Transverse colon (tissue), 4 donors: ENCODE measurements at regions of chr4 and their contacts with region 1.

Region 1: DNA sequence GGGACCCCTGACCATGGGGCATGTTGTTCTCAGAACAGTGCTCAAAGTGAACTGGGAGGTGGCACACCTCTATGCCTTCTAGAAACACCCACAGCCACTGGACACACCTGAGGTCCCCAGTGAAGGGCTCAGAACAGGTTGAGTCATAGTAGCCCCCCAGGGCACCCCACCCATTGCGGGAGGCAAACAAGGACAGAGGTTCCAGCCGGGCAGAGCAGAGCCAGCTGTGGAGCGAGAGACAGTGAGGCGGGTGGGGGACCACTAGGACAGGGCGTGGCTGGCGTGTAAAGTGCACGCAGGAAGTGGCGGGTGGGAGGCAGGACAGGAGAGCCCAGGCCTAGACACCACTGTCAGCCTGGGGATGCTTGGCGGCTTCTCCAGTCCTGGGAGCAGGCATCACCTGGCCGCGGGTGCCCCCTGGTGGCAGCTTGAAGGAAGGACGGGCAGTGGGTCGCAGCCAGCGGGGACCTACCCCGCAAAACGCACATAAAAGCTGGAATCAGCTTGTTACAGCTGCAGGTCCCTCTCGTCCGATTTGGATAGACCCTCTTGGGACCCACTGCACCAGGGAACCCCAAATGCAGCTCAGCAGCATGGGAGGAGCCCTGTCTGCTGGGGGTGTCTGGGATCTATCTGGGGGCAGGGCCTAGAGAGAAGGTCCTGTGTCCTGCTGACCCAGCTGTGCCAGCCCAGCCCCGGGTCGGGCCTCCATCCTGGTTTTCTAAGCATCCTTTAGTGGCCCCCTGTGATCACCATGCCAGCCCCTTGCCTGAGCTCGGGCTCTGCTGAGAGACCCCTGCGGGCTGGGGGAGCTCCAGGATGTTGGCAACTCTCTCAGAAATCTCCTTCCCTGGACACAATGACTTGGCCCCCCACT is 57.6 kb downstream of the WFS1 start:
- DNase-seq: peak; percentile 81
- H3K4me3 ChIP-seq: no peak overlapping the region
- H3K27ac ChIP-seq: no peak overlapping the region
- H3K4me1 ChIP-seq: peaks cover 0 to 8% (median 1%) of the 10 kb centered on the region in 4 donors
- H3K27me3 ChIP-seq: peaks cover 4% of the 10 kb centered on the region
- CTCF ChIP-seq: peak; percentile 94 to 97 (median 96)
- EP300 ChIP-seq: no peak
- POLR2A ChIP-seq: no peak

Region 2: GRCh38 chr4:5845035-5845905 is 482.0 kb before region 1 on chr4:
- in situ Hi-C with region 1: no loop called
- intact Hi-C with region 1: no loop called
- DNase-seq: no peak
- H3K4me3 ChIP-seq: no peak overlapping the region
- H3K27ac ChIP-seq: peak overlapping the region in 3 of 4 donors; percentile 26 to 69 (median 39)
- H3K4me1 ChIP-seq: peaks cover 0 to 13% (median 3%) of the 10 kb centered on the region in 4 donors
- H3K27me3 ChIP-seq: no peaks in the 10 kb centered on the region
- CTCF ChIP-seq: no peak
- EP300 ChIP-seq: no peak
- POLR2A ChIP-seq: no peak

Region 3: GRCh38 chr4:6200011-6200921 is 127.0 kb before region 1 on chr4 and contains the start of gene JAKMIP1:
- in situ Hi-C with region 1: no loop called
- intact Hi-C with region 1: no loop called
- DNase-seq: peak; percentile 82
- H3K4me3 ChIP-seq: peak within 1 kb of the TSS; percentile 19 to 53 (median 41)
- H3K27ac ChIP-seq: no peak within 1 kb of the TSS
- H3K4me1 ChIP-seq: peaks cover 0 to 16% (median 14%) of the 10 kb centered on the region in 4 donors
- H3K27me3 ChIP-seq: peaks cover 60% of the 10 kb centered on the region
- CTCF ChIP-seq: no peak
- EP300 ChIP-seq: no peak
- POLR2A ChIP-seq: no peak
- total RNA-seq, gene JAKMIP1: 1.2 to 1.7 TPM in 2 of 4 donors, not detected in the others

Region 4: GRCh38 chr4:6250235-6250983 is 76.9 kb before region 1 on chr4:
- in situ Hi-C with region 1: loop called (anchors 5 kb)
- intact Hi-C with region 1: loop called (anchors 1 kb)
- DNase-seq: no peak
- H3K4me3 ChIP-seq: no peak overlapping the region
- H3K27ac ChIP-seq: no peak overlapping the region
- H3K4me1 ChIP-seq: no peaks in the 10 kb centered on the region
- H3K27me3 ChIP-seq: peaks cover 49% of the 10 kb centered on the region
- CTCF ChIP-seq: peak; percentile 76 to 89 (median 83)
- EP300 ChIP-seq: no peak
- POLR2A ChIP-seq: no peak

Region 5: GRCh38 chr4:6257247-6258025 is 69.8 kb before region 1 on chr4:
- in situ Hi-C with region 1: loop called (anchors 5 kb)
- intact Hi-C with region 1: no loop called
- DNase-seq: no peak
- H3K4me3 ChIP-seq: no peak overlapping the region
- H3K27ac ChIP-seq: no peak overlapping the region
- H3K4me1 ChIP-seq: no peaks in the 10 kb centered on the region
- H3K27me3 ChIP-seq: peaks cover 13% of the 10 kb centered on the region
- CTCF ChIP-seq: no peak
- EP300 ChIP-seq: no peak
- POLR2A ChIP-seq: no peak

Region 6: GRCh38 chr4:6362896-6363295 is 35.6 kb after region 1 on chr4:
- in situ Hi-C with region 1: no loop called
- intact Hi-C with region 1: no loop called
- DNase-seq: no peak
- H3K4me3 ChIP-seq: no peak overlapping the region
- H3K27ac ChIP-seq: no peak overlapping the region
- H3K4me1 ChIP-seq: peaks cover 0 to 10% (median 0%) of the 10 kb centered on the region in 4 donors
- H3K27me3 ChIP-seq: peaks cover 4% of the 10 kb centered on the region
- CTCF ChIP-seq: no peak
- EP300 ChIP-seq: no peak
- POLR2A ChIP-seq: no peak